A673 (cell line): ENCODE measurements at regions of chr10 and their contacts with region 1.

Region 1: GRCh38 chr10:26627324-26627723 is 70.2 kb upstream of the PDSS1 start:
- DNase-seq: peak; percentile 17
- H3K4me3 ChIP-seq: no peak overlapping the region
- H3K27ac ChIP-seq: no peak overlapping the region
- H3K4me1 ChIP-seq: no peaks in the 10 kb centered on the region
- H3K27me3 ChIP-seq: no peaks in the 10 kb centered on the region
- CTCF ChIP-seq: 0 out of 2 replicates have a peak, but pooled peaks have one; percentile 10

Region 2: GRCh38 chr10:26571655-26572054 is 55.7 kb before region 1 on chr10:
- CTCF ChIA-PET with region 1: no interaction called
- POLR2A ChIA-PET with region 1: no interaction called
- intact Hi-C with region 1: loop called (anchors 2 kb)
- DNase-seq: no peak
- H3K4me3 ChIP-seq: no peak overlapping the region
- H3K27ac ChIP-seq: no peak overlapping the region
- H3K4me1 ChIP-seq: no peaks in the 10 kb centered on the region
- H3K27me3 ChIP-seq: peaks cover 17% of the 10 kb centered on the region
- CTCF ChIP-seq: no peak

Region 3: GRCh38 chr10:27319752-27320561 is 692.6 kb after region 1 on chr10:
- CTCF ChIA-PET with region 1: no interaction called
- POLR2A ChIA-PET with region 1: no interaction called
- intact Hi-C with region 1: loop called (anchors 5 kb)
- DNase-seq: no peak
- H3K4me3 ChIP-seq: no peak overlapping the region
- H3K27ac ChIP-seq: no peak overlapping the region
- H3K4me1 ChIP-seq: no peaks in the 10 kb centered on the region
- H3K27me3 ChIP-seq: peaks cover 19% of the 10 kb centered on the region
- CTCF ChIP-seq: no peak